B cell (primary cell): ENCODE measurements at regions of chr4 and their contacts with region 1.

Region 1: GRCh38 chr4:2689825-2690700 is 66.1 kb downstream of the TNIP2 start:
- DNase-seq: peak; percentile 90
- ATAC-seq: peak; percentile 91
- H3K4me3 ChIP-seq: peak overlapping the region in 3 of 5 experiments; percentile 17 to 34 (median 18)
- H3K4me3 Mint-ChIP-seq: peak overlapping the region; percentile 81
- H3K27ac ChIP-seq: peak overlapping the region; percentile 77 to 88
- H3K27ac Mint-ChIP-seq: peak overlapping the region; percentile 92
- H3K4me1 ChIP-seq: peaks cover 44 to 46% of the 10 kb centered on the region in 2 donors
- H3K4me1 Mint-ChIP-seq: peaks cover 60% of the 10 kb centered on the region
- H3K27me3 ChIP-seq: no peaks in the 10 kb centered on the region
- H3K27me3 Mint-ChIP-seq: no peaks in the 10 kb centered on the region
- CTCF ChIP-seq: no peak

Region 2: GRCh38 chr4:2673157-2673556 is 16.9 kb before region 1 on chr4:
- CTCF ChIA-PET with region 1: interaction called, 10 read pairs
- POLR2A ChIA-PET with region 1: no interaction called
- intact Hi-C with region 1: no loop called
- DNase-seq: no peak
- ATAC-seq: no peak
- H3K4me3 ChIP-seq: no peak overlapping the region
- H3K4me3 Mint-ChIP-seq: no peak overlapping the region
- H3K27ac ChIP-seq: peak overlapping the region in 1 of 2 donors; percentile 34
- H3K27ac Mint-ChIP-seq: no peak overlapping the region
- H3K4me1 ChIP-seq: peaks cover 0 to 15% of the 10 kb centered on the region in 2 donors
- H3K4me1 Mint-ChIP-seq: peaks cover 31% of the 10 kb centered on the region
- H3K27me3 ChIP-seq: no peaks in the 10 kb centered on the region
- H3K27me3 Mint-ChIP-seq: no peaks in the 10 kb centered on the region
- CTCF ChIP-seq: peak; percentile 20

Region 3: DNA sequence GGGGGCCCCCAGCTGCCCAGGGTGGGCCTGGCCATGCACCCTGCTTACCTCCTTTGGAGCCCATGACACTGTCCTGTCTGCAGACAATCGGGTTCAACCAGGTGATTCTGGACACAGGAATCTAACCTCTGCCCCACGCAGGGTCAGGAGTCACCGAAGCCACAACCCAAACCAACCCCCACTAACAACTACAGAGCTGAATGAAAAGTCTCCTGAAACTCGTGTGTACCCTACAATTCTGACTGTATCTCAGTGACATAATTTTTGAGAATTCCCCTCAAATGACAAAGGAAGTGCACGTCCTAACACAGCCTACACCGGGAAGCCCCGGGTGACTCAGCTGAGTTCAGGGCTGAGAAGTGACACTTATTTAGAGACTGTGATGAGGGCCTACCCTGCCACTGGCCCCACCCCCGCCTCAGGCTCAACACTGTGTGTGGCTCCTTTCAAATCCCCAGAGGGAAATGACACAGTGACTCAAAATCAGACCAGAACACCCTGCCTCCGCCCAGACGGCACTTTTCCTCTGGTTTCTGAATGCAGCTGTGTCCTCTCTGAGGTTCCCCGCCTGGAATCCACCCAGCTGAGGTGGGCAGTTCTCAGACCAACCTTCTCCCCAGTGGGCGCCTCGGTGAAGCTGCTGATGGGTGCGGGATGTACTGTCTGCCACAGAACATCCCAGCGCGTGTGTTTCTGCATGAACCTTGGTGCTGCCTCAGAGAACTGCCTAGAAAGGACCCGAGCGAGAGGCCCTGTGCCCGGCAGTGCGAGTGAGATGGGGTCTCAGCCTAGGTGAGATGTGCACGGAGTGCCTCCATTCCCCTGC is 56.1 kb after region 1 on chr4:
- CTCF ChIA-PET with region 1: interaction called, 3 read pairs
- POLR2A ChIA-PET with region 1: interaction called, 7 read pairs
- intact Hi-C with region 1: loop called (anchors 1 kb)
- DNase-seq: peak; percentile 95
- ATAC-seq: peak; percentile 96
- H3K4me3 ChIP-seq: peak overlapping the region in 2 of 5 experiments; percentile 5 to 17
- H3K4me3 Mint-ChIP-seq: peak overlapping the region; percentile 70
- H3K27ac ChIP-seq: peak overlapping the region; percentile 93 to 95
- H3K27ac Mint-ChIP-seq: peak overlapping the region; percentile 93
- H3K4me1 ChIP-seq: peaks cover 30 to 44% of the 10 kb centered on the region in 2 donors
- H3K4me1 Mint-ChIP-seq: peaks cover 46% of the 10 kb centered on the region
- H3K27me3 ChIP-seq: no peaks in the 10 kb centered on the region
- H3K27me3 Mint-ChIP-seq: no peaks in the 10 kb centered on the region
- CTCF ChIP-seq: no peak

Region 4: DNA sequence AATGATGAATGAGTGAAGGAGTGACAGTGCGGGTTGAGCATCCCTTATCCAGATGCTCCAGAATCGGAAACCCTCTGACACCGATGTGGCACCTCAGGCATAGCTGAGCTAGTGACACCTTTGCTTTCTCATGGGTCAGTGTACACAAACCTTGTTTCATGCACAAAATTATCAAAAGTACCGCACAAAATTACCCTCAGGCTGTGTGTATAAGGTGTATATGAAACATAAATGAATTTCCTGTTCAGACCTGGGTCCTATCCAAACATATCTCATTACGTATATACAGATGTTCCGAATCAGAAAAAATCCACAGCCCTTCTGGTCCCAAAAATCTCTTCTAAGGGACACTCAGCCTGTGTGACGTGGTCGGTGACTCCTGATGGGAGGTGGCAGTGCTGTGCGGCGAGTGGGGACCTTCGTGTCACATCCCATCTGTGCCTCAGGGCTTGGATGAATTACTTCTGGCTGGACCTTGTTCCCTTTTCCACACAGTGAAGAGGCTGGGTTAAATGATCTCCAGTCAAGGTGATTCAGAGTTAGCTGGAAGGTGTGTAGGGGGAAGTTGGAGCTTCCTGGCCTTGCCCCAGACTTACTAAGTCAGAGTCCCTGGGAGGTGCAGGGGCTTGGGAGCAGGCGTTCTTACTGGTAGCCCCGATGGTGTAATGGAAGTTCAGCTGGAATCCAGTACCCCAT is 621.6 kb after region 1 on chr4:
- CTCF ChIA-PET with region 1: no interaction called
- POLR2A ChIA-PET with region 1: no interaction called
- intact Hi-C with region 1: no loop called
- DNase-seq: no peak
- ATAC-seq: no peak
- H3K4me3 ChIP-seq: no peak overlapping the region
- H3K4me3 Mint-ChIP-seq: no peak overlapping the region
- H3K27ac ChIP-seq: no peak overlapping the region
- H3K27ac Mint-ChIP-seq: no peak overlapping the region
- H3K4me1 ChIP-seq: no peaks in the 10 kb centered on the region
- H3K4me1 Mint-ChIP-seq: no peaks in the 10 kb centered on the region
- H3K27me3 ChIP-seq: no peaks in the 10 kb centered on the region
- H3K27me3 Mint-ChIP-seq: no peaks in the 10 kb centered on the region
- CTCF ChIP-seq: no peak